PC-3 (cell line): ENCODE measurements at regions of chr18 and their contacts with region 1.

Region 1: GRCh38 chr18:58443671-58444070 is 185.2 kb downstream of the ALPK2 start:
- DNase-seq: no peak
- ATAC-seq: no peak
- H3K4me3 ChIP-seq: no peak overlapping the region
- H3K27ac ChIP-seq: no peak overlapping the region
- H3K4me1 ChIP-seq: no peaks in the 10 kb centered on the region
- H3K27me3 ChIP-seq: no peaks in the 10 kb centered on the region
- CTCF ChIP-seq: no peak

Region 2: GRCh38 chr18:58392324-58393000 is 51.2 kb before region 1 on chr18:
- CTCF ChIA-PET with region 1: no interaction called
- POLR2A ChIA-PET with region 1: no interaction called
- intact Hi-C with region 1: no loop called
- DNase-seq: no peak
- ATAC-seq: no peak
- H3K4me3 ChIP-seq: no peak overlapping the region
- H3K27ac ChIP-seq: no peak overlapping the region
- H3K4me1 ChIP-seq: no peaks in the 10 kb centered on the region
- H3K27me3 ChIP-seq: no peaks in the 10 kb centered on the region
- CTCF ChIP-seq: no peak

Region 3: DNA sequence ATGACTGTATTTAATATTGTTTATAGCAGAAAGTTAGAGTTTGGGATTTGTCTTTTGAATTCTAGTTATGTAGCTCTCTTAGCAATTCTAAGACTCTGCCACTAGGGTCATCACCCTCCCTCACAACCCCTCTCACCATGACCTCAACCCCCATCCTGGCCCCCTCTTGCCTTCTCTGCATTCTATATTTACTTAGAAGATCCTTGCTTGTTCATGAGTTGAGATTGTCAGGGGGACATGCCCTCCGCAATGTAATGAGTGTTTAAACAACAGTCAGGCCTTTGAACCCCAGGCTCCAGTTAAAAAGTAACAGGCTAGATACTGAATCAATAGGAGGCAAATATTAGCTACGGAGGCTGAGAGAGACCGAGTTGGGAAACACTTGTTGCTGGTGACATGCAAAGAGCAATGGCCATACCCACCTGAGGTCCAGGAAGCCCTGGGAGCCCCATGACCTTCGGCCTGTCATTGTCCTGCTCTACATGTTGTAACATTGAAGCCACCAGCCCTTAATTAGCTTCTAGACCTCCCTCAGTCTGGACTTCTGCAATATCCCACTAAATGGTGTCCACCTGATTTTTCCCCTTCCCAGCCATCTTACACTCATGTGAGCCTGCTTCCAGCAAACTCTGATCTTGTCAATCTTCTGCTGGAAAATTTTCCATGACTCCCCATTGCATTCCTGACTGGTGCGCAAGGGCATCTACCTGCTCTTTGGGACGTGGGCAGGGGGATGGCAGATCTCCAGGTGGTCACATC is 35.8 kb before region 1 on chr18:
- CTCF ChIA-PET with region 1: no interaction called
- POLR2A ChIA-PET with region 1: no interaction called
- intact Hi-C with region 1: loop called (anchors 5 kb)
- DNase-seq: no peak
- ATAC-seq: no peak
- H3K4me3 ChIP-seq: no peak overlapping the region
- H3K27ac ChIP-seq: no peak overlapping the region
- H3K4me1 ChIP-seq: no peaks in the 10 kb centered on the region
- H3K27me3 ChIP-seq: no peaks in the 10 kb centered on the region
- CTCF ChIP-seq: no peak

Region 4: DNA sequence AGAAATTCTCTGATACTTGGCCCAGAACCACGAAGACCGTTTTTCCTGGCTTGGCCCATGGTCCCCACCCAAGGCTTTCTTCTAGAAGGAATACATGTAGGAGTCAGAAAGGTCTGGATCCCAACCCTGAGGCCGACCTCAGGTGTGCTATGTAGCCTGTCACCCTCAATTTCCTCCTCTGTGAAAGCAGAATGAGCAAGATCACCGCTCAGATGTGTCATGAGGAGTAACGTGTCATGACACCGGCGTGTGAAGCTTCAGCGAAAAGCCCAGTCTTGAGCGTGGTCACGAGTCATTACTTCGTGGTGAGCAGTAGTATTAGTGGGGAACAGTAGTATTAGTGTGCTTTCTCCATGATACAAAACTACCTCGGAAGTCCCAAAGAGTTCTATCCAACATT is 81.8 kb after region 1 on chr18:
- CTCF ChIA-PET with region 1: no interaction called
- POLR2A ChIA-PET with region 1: no interaction called
- intact Hi-C with region 1: no loop called
- DNase-seq: no peak
- ATAC-seq: no peak
- H3K4me3 ChIP-seq: no peak overlapping the region
- H3K27ac ChIP-seq: no peak overlapping the region
- H3K4me1 ChIP-seq: no peaks in the 10 kb centered on the region
- H3K27me3 ChIP-seq: no peaks in the 10 kb centered on the region
- CTCF ChIP-seq: no peak